ENCODE measurements at regions of chr1 and their contacts with region 1.

Region 1: DNA sequence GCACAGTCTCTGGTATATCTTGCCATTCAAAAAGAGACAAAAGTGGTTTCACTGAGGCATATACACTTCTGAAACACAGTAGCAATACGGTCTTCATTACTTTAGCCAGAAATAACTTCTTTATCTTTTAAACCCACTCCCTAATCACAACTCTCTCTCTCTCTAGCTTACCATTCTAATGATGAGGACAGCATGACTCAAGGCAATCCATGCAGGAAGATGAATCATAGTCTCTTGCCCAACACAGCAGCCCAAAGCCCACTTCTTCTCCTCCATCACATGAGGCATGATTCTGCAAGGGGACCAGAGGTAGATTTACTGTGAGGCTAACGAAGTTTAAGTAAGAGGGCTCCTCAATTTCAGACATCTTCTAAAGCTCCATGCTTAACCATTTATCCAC is 285.0 kb upstream of the NR5A2 start:
- DNase-seq: no peak
- H3K4me3 ChIP-seq: no peak overlapping the region
- H3K27ac ChIP-seq: no peak overlapping the region
- H3K4me1 ChIP-seq: no peaks in the 10 kb centered on the region
- H3K27me3 ChIP-seq: peaks cover 0 to under 1% (median 0%) of the 10 kb centered on the region in 4 donors
- CTCF ChIP-seq: no peak
- POLR2A ChIP-seq: no peak

Region 2: GRCh38 chr1:199706826-199707606 is 35.5 kb before region 1 on chr1:
- intact Hi-C with region 1: loop called (anchors 2 kb)
- DNase-seq: no peak
- H3K4me3 ChIP-seq: no peak overlapping the region
- H3K27ac ChIP-seq: no peak overlapping the region
- H3K4me1 ChIP-seq: no peaks in the 10 kb centered on the region
- H3K27me3 ChIP-seq: no peaks in the 10 kb centered on the region
- CTCF ChIP-seq: no peak
- POLR2A ChIP-seq: no peak

Measured in esophagus squamous epithelium (tissue), 5 donors.